ENCODE measurements at regions of chr18 and their contacts with region 1.

Region 1: GRCh38 chr18:75070625-75071483 is 138.1 kb downstream of the PTGR3 start:
- DNase-seq: peak; percentile 88
- H3K4me3 Mint-ChIP-seq: peak overlapping the region; percentile 73
- H3K27ac Mint-ChIP-seq: peak overlapping the region; percentile 95
- H3K4me1 Mint-ChIP-seq: peaks cover 31% of the 10 kb centered on the region
- H3K27me3 Mint-ChIP-seq: no peaks in the 10 kb centered on the region

Region 2: GRCh38 chr18:74063023-74063422 is 1007.8 kb before region 1 on chr18:
- CTCF ChIA-PET with region 1: no interaction called
- intact Hi-C with region 1: loop called (anchors 10 kb)
- DNase-seq: peak; percentile 75
- H3K4me3 Mint-ChIP-seq: peak overlapping the region; percentile 3
- H3K27ac Mint-ChIP-seq: peak overlapping the region; percentile 88
- H3K4me1 Mint-ChIP-seq: peaks cover 40% of the 10 kb centered on the region
- H3K27me3 Mint-ChIP-seq: no peaks in the 10 kb centered on the region

Region 3: GRCh38 chr18:74597662-74598349 is 473.0 kb before region 1 on chr18 and contains the start of gene ZNF407:
- CTCF ChIA-PET with region 1: no interaction called
- intact Hi-C with region 1: loop called (anchors 1 kb)
- DNase-seq: peak; percentile 91
- H3K4me3 Mint-ChIP-seq: peak within 1 kb of the TSS; percentile 86
- H3K27ac Mint-ChIP-seq: peak within 1 kb of the TSS; percentile 98
- H3K4me1 Mint-ChIP-seq: peaks cover 38% of the 10 kb centered on the region
- H3K27me3 Mint-ChIP-seq: no peaks in the 10 kb centered on the region
- total RNA-seq, gene ZNF407: 9.8 to 9.9 TPM

Region 4: DNA sequence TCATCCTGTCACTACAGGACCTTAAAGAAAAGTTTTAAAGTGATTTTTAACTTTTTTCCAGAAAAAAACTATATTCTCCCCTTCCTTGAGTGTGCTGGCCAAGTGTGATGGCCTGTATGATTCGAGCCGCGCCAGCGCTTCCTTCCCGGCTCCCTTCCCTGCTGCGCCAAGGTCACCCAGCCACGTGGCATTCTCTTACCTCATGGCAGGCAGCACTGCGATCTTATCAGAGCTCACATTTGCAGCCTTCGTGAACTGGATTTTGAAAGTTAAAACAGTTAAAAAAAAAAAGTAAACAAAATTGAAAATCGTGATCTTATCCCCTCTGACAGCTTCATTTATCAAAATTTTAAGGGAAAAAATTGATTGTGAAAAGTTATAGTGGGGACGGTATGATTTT is 141.7 kb before region 1 on chr18:
- CTCF ChIA-PET with region 1: no interaction called
- intact Hi-C with region 1: no loop called
- DNase-seq: no peak
- H3K4me3 Mint-ChIP-seq: no peak overlapping the region
- H3K27ac Mint-ChIP-seq: no peak overlapping the region
- H3K4me1 Mint-ChIP-seq: no peaks in the 10 kb centered on the region
- H3K27me3 Mint-ChIP-seq: no peaks in the 10 kb centered on the region

Region 5: GRCh38 chr18:74942319-74942910 is 128.4 kb before region 1 on chr18:
- CTCF ChIA-PET with region 1: no interaction called
- intact Hi-C with region 1: loop called (anchors 2 kb)
- DNase-seq: peak; percentile 49
- H3K4me3 Mint-ChIP-seq: no peak overlapping the region
- H3K27ac Mint-ChIP-seq: no peak overlapping the region
- H3K4me1 Mint-ChIP-seq: peaks cover 17% of the 10 kb centered on the region
- H3K27me3 Mint-ChIP-seq: no peaks in the 10 kb centered on the region

Region 6: GRCh38 chr18:74994502-74995419 is 76.1 kb before region 1 on chr18:
- CTCF ChIA-PET with region 1: no interaction called
- intact Hi-C with region 1: loop called (anchors 1 kb)
- DNase-seq: peak; percentile 34
- H3K4me3 Mint-ChIP-seq: peak overlapping the region; percentile 30
- H3K27ac Mint-ChIP-seq: peak overlapping the region; percentile 50
- H3K4me1 Mint-ChIP-seq: peaks cover 41% of the 10 kb centered on the region
- H3K27me3 Mint-ChIP-seq: no peaks in the 10 kb centered on the region

Region 7: DNA sequence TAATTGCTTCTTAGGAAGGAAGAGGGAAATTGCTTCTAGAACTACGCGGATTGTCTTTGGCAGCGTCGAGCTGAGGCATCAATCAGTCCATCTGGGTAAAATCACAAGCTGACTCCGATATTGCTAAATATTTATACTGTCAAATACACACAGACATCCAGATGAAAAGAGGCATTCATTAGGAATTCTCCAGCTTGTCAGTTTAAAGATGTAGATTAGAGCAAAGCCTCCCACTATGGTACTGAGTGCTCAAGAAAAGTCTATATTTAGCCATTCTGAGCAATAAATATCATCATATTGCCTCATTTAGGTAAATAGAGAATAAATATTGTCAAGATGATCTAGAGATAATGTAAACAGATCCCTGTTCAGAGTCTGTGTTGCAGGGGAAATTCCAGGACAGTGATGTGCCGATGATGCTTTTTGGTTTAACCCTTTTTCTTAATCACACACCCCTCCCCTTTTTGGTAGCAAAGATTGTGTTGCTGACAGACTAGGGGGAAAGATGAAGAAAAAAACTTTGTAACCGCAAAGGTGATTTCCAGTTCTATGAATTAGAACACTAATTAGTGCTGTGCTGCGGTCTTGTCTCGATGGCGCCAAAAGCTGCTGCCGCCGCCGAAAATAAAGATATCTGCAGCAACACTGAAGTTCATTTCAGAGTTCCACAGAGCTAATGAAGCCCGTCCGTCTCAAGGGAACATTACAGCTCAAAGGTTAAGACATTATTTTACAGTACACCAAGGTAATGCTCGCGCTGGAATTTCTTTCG is 33.8 kb before region 1 on chr18:
- CTCF ChIA-PET with region 1: no interaction called
- intact Hi-C with region 1: loop called (anchors 1 kb)
- DNase-seq: no peak
- H3K4me3 Mint-ChIP-seq: no peak overlapping the region
- H3K27ac Mint-ChIP-seq: no peak overlapping the region
- H3K4me1 Mint-ChIP-seq: peaks cover 5% of the 10 kb centered on the region
- H3K27me3 Mint-ChIP-seq: no peaks in the 10 kb centered on the region

Region 8: GRCh38 chr18:75334869-75335268 is 264.0 kb after region 1 on chr18:
- CTCF ChIA-PET with region 1: no interaction called
- intact Hi-C with region 1: no loop called
- DNase-seq: no peak
- H3K4me3 Mint-ChIP-seq: no peak overlapping the region
- H3K27ac Mint-ChIP-seq: no peak overlapping the region
- H3K4me1 Mint-ChIP-seq: no peaks in the 10 kb centered on the region
- H3K27me3 Mint-ChIP-seq: no peaks in the 10 kb centered on the region

Region 9: GRCh38 chr18:76374330-76375281 is 1303.8 kb after region 1 on chr18:
- CTCF ChIA-PET with region 1: no interaction called
- intact Hi-C with region 1: loop called (anchors 1 kb)
- DNase-seq: peak; percentile 80
- H3K4me3 Mint-ChIP-seq: no peak overlapping the region
- H3K27ac Mint-ChIP-seq: peak overlapping the region; percentile 74
- H3K4me1 Mint-ChIP-seq: peaks cover 46% of the 10 kb centered on the region
- H3K27me3 Mint-ChIP-seq: peaks cover 2% of the 10 kb centered on the region

Measured in activated naive CD4-positive, alpha-beta T cell treated with anti-CD3 and anti-CD28 coated beads for 36 hours (primary cell).